Endothelial cell of umbilical vein (primary cell): ENCODE measurements at regions of chr20 and their contacts with region 1.

Region 1: DNA sequence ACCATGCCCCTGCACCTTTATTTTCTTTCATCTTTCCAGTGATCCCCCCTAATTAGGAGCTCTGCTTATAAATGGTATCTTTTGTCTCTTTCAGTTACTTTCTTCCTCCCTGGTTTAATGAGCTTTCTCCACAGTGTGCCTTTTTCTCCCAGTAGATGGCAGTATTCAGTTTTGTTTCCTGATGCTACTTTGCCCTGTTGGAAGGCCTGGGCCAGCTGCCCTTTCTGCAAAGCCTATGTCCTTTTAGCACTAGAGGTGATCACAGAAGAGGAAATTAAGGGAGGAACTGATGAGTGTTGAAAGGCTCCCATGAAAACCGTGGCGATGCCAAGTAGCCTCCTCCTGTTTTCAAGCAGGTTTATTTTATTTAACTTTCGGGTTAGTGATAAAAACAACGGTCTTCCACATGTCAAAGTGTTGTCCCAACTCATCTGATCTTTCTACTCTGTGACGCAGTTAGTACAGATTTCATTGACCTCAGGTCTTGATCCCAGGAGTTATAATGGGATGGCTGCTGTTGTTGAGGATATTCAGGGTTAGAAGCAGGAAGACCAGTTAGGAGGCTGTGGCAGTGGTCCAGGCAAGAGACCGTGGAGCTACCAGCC is 184.2 kb upstream of the BMP2 start:
- DNase-seq: peak; percentile 78
- H3K4me3 ChIP-seq: no peak overlapping the region
- H3K27ac ChIP-seq: peak overlapping the region; percentile 24
- H3K4me1 ChIP-seq: peaks cover 15% of the 10 kb centered on the region
- H3K27me3 ChIP-seq: no peaks in the 10 kb centered on the region
- CTCF ChIP-seq: peak; percentile 56 to 61
- POLR2A ChIP-seq: no peak

Region 2: GRCh38 chr20:6142348-6142993 is 440.8 kb before region 1 on chr20:
- CTCF ChIA-PET with region 1: no interaction called
- POLR2A ChIA-PET with region 1: no interaction called
- dilution Hi-C with region 1: no loop called
- intact Hi-C with region 1: no loop called
- DNase-seq: peak; percentile 64
- H3K4me3 ChIP-seq: no peak overlapping the region
- H3K27ac ChIP-seq: no peak overlapping the region
- H3K4me1 ChIP-seq: no peaks in the 10 kb centered on the region
- H3K27me3 ChIP-seq: peaks cover 0 to 10% of the 10 kb centered on the region in 2 experiments
- CTCF ChIP-seq: peak; percentile 58 to 68
- POLR2A ChIP-seq: no peak

Region 3: GRCh38 chr20:6501061-6501460 is 82.2 kb before region 1 on chr20:
- CTCF ChIA-PET with region 1: interaction called, 5 read pairs
- POLR2A ChIA-PET with region 1: no interaction called
- dilution Hi-C with region 1: no loop called
- intact Hi-C with region 1: loop called (anchors 5 kb)
- DNase-seq: peak; percentile 81
- H3K4me3 ChIP-seq: no peak overlapping the region
- H3K27ac ChIP-seq: peak overlapping the region; percentile 22
- H3K4me1 ChIP-seq: peaks cover 12% of the 10 kb centered on the region
- H3K27me3 ChIP-seq: no peaks in the 10 kb centered on the region
- CTCF ChIP-seq: no peak
- POLR2A ChIP-seq: no peak

Region 4: GRCh38 chr20:6599876-6600735 is 16.9 kb after region 1 on chr20:
- CTCF ChIA-PET with region 1: interaction called, 20 read pairs
- POLR2A ChIA-PET with region 1: no interaction called
- dilution Hi-C with region 1: no loop called
- intact Hi-C with region 1: no loop called
- DNase-seq: no peak
- H3K4me3 ChIP-seq: no peak overlapping the region
- H3K27ac ChIP-seq: no peak overlapping the region
- H3K4me1 ChIP-seq: peaks cover 9% of the 10 kb centered on the region
- H3K27me3 ChIP-seq: peaks cover 2 to 3% of the 10 kb centered on the region in 2 experiments
- CTCF ChIP-seq: no peak
- POLR2A ChIP-seq: no peak

Region 5: GRCh38 chr20:6683021-6683977 is 100.1 kb after region 1 on chr20:
- CTCF ChIA-PET with region 1: no interaction called
- POLR2A ChIA-PET with region 1: no interaction called
- dilution Hi-C with region 1: no loop called
- intact Hi-C with region 1: no loop called
- DNase-seq: no peak
- H3K4me3 ChIP-seq: no peak overlapping the region
- H3K27ac ChIP-seq: no peak overlapping the region
- H3K4me1 ChIP-seq: peaks cover 20% of the 10 kb centered on the region
- H3K27me3 ChIP-seq: no peaks in the 10 kb centered on the region
- CTCF ChIP-seq: no peak
- POLR2A ChIP-seq: no peak

Region 6: GRCh38 chr20:6708010-6708409 is 124.8 kb after region 1 on chr20:
- CTCF ChIA-PET with region 1: interaction called, 3 read pairs
- POLR2A ChIA-PET with region 1: no interaction called
- dilution Hi-C with region 1: no loop called
- intact Hi-C with region 1: loop called (anchors 5 kb)
- DNase-seq: peak; percentile 91
- H3K4me3 ChIP-seq: no peak overlapping the region
- H3K27ac ChIP-seq: peak overlapping the region; percentile 11
- H3K4me1 ChIP-seq: peaks cover 68% of the 10 kb centered on the region
- H3K27me3 ChIP-seq: no peaks in the 10 kb centered on the region
- CTCF ChIP-seq: no peak
- POLR2A ChIP-seq: no peak

Region 7: DNA sequence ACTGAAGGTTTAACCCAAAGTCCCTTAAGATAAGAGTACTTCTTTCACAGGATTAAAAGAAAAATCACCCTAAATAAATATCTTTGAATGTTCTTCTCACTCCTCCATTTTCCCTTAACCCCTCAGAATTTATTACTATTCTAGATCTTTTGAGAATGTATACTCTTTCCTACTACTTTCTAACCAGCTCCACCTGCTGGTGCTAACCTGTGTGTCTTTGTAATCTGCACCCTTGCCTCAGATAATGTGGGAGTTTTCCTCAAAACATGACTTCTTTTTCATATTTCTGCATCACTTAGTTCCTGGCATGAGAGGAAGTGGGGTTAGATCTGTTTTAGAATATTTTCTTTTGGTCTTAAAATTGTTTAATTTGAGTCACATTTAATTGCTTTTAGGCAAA is 578.5 kb after region 1 on chr20:
- CTCF ChIA-PET with region 1: interaction called, 5 read pairs
- POLR2A ChIA-PET with region 1: no interaction called
- dilution Hi-C with region 1: no loop called
- intact Hi-C with region 1: loop called (anchors 5 kb)
- DNase-seq: peak; percentile 36
- H3K4me3 ChIP-seq: no peak overlapping the region
- H3K27ac ChIP-seq: no peak overlapping the region
- H3K4me1 ChIP-seq: peaks cover 16% of the 10 kb centered on the region
- H3K27me3 ChIP-seq: no peaks in the 10 kb centered on the region
- CTCF ChIP-seq: peak in 1 of 2 donors; percentile 35
- POLR2A ChIP-seq: no peak